B cell (primary cell): ENCODE measurements at regions of chr5 and their contacts with region 1.

Region 1: GRCh38 chr5:142888469-142889085 is 118.4 kb downstream of the ARHGAP26 start:
- DNase-seq: peak; percentile 48
- ATAC-seq: peak; percentile 28
- H3K4me3 ChIP-seq: no peak overlapping the region
- H3K4me3 Mint-ChIP-seq: no peak overlapping the region
- H3K27ac ChIP-seq: no peak overlapping the region
- H3K27ac Mint-ChIP-seq: no peak overlapping the region
- H3K4me1 ChIP-seq: no peaks in the 10 kb centered on the region
- H3K4me1 Mint-ChIP-seq: no peaks in the 10 kb centered on the region
- H3K27me3 ChIP-seq: no peaks in the 10 kb centered on the region
- H3K27me3 Mint-ChIP-seq: no peaks in the 10 kb centered on the region
- CTCF ChIP-seq: peak; percentile 84

Region 2: DNA sequence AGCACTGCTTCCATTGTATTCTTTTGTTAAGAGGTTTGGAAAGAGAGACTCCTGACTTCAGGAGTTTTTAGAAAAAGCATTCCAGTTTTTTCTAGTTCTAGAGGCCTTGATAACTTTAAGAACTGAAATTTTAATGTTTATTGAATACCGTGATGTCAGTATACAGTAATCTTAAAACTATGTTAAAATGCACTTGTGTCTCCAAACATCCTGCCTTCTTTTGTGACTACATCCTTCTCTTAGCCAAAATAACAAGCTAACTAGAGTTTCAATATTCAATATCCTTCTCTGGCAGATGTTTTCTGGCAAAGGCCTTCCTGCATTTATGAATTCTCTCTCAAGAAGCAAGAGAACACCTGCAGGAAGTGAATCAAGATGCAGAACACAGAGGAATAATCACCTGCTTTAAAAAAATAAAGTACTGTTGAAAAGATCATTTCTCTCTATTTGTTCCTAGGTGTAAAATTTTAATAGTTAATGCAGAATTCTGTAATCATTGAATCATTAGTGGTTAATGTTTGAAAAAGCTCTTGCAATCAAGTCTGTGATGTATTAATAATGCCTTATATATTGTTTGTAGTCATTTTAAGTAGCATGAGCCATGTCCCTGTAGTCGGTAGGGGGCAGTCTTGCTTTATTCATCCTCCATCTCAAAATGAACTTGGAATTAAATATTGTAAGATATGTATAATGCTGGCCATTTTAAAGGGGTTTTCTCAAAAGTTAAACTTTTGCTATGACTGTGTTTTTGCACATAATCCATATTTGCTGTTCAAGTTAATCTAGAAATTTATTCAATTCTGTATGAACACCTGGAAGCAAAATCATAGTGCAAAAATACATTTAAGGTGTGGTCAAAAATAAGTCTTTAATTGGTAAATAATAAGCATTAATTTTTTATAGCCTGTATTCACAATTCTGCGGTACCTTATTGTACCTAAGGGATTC is 736.9 kb before region 1 on chr5:
- CTCF ChIA-PET with region 1: no interaction called
- POLR2A ChIA-PET with region 1: no interaction called
- intact Hi-C with region 1: loop called (anchors 10 kb)
- DNase-seq: peak; percentile 67
- ATAC-seq: no peak
- H3K4me3 ChIP-seq: no peak overlapping the region
- H3K4me3 Mint-ChIP-seq: no peak overlapping the region
- H3K27ac ChIP-seq: no peak overlapping the region
- H3K27ac Mint-ChIP-seq: no peak overlapping the region
- H3K4me1 ChIP-seq: no peaks in the 10 kb centered on the region
- H3K4me1 Mint-ChIP-seq: no peaks in the 10 kb centered on the region
- H3K27me3 ChIP-seq: no peaks in the 10 kb centered on the region
- H3K27me3 Mint-ChIP-seq: no peaks in the 10 kb centered on the region
- CTCF ChIP-seq: peak; percentile 90

Region 3: DNA sequence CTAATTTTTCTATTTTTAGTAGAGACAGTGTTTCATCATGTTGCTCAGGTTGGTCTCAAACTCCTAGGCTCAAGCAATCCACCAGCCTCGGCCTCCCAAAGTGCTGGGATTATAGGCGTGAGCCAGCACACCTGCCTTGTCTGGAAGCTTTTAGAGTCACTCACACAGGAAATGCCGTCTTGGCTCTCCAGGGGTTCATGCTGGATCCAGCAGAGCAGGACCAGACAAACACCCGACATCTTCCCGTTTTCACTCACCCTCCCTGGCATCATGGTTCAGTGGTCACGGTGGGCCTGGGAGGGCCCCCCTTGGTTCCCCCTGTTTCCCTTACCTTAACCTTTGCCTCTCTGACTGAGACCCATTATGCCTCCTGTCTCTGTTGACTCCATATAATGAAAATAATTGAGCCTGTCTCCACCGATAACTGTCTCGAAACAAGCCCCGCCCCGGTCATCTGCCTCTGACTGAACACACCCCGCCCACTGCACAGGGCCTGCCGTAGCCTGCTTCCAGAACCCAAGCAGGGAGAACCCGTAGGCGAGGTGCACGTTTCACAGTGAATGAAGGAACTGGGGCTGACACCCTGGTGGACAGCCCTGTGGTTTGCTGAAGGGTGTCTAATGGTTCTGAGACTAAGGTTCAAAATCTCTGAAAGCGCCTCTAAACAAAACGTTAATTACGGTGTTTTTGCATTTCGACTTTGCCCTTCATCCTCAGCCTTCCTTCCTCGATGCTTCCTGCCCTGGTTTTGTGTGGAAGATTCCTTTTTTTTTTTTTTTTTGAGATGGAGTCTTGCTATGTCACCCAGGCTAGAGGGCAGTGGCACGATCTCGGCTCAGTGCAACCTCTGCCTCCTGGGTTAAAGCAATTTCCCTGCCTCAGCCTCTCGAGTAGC is 524.1 kb before region 1 on chr5:
- CTCF ChIA-PET with region 1: no interaction called
- POLR2A ChIA-PET with region 1: no interaction called
- intact Hi-C with region 1: no loop called
- DNase-seq: peak; percentile 27
- ATAC-seq: peak; percentile 34
- H3K4me3 ChIP-seq: no peak overlapping the region
- H3K4me3 Mint-ChIP-seq: peak overlapping the region; percentile 52
- H3K27ac ChIP-seq: no peak overlapping the region
- H3K27ac Mint-ChIP-seq: no peak overlapping the region
- H3K4me1 ChIP-seq: peaks cover 29 to 30% of the 10 kb centered on the region in 2 donors
- H3K4me1 Mint-ChIP-seq: peaks cover 33% of the 10 kb centered on the region
- H3K27me3 ChIP-seq: peaks cover 0 to 27% (median 3%) of the 10 kb centered on the region in 4 experiments
- H3K27me3 Mint-ChIP-seq: peaks cover 15% of the 10 kb centered on the region
- CTCF ChIP-seq: no peak

Region 4: GRCh38 chr5:142611154-142611553 is 277.4 kb before region 1 on chr5:
- CTCF ChIA-PET with region 1: interaction called, 6 read pairs
- POLR2A ChIA-PET with region 1: no interaction called
- intact Hi-C with region 1: loop called (anchors 1 kb)
- DNase-seq: peak; percentile 59
- ATAC-seq: peak; percentile 53
- H3K4me3 ChIP-seq: no peak overlapping the region
- H3K4me3 Mint-ChIP-seq: no peak overlapping the region
- H3K27ac ChIP-seq: no peak overlapping the region
- H3K27ac Mint-ChIP-seq: no peak overlapping the region
- H3K4me1 ChIP-seq: no peaks in the 10 kb centered on the region
- H3K4me1 Mint-ChIP-seq: no peaks in the 10 kb centered on the region
- H3K27me3 ChIP-seq: peaks cover 0 to 10% (median under 1%) of the 10 kb centered on the region in 4 experiments
- H3K27me3 Mint-ChIP-seq: peaks cover 28% of the 10 kb centered on the region
- CTCF ChIP-seq: peak; percentile 88

Region 5: DNA sequence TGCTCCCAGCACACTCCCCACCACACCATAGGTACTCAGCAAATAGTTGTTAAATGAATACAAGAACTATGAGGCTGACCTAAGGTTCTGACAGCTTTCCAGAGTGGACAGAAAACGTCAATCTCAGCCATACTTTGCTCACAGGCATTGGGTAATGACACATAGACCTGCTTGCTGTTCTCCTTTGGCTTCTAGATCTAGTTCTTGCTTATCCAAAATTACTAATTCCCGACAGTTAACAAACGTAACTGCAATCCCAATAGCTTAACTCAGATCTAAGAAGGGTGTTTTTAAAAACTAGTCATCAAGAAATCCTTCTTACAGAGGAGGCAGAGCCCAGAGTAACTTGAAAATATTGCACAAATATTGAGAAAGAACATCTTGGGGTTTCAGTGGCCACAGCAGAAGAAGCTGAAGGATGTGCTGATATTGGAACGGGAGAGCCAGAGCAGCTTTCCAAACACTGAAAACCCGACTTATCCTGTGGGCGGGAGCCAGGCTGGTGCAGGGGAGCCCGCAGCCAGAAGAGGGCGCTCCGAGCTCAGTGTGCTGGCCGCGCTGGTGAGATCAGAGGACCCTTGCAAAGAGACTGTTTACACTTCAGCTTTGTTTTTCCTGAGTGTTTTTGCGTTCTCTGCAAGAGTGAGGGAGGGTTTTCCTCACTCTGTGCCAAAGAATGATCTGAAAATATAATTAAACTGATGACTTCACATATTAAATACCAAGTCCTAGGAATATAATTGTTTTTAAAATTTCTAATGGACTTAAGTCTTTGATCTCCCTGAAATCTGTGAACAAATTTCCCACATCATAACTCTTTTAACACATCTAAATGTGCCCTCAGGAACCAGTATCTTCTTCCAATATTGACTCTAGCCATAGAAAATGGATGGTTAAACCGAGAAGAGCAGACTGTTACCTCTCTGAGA is 233.0 kb before region 1 on chr5:
- CTCF ChIA-PET with region 1: interaction called, 32 read pairs
- POLR2A ChIA-PET with region 1: no interaction called
- intact Hi-C with region 1: loop called (anchors 1 kb)
- DNase-seq: peak; percentile 60
- ATAC-seq: peak; percentile 75
- H3K4me3 ChIP-seq: no peak overlapping the region
- H3K4me3 Mint-ChIP-seq: no peak overlapping the region
- H3K27ac ChIP-seq: no peak overlapping the region
- H3K27ac Mint-ChIP-seq: no peak overlapping the region
- H3K4me1 ChIP-seq: no peaks in the 10 kb centered on the region
- H3K4me1 Mint-ChIP-seq: no peaks in the 10 kb centered on the region
- H3K27me3 ChIP-seq: peaks cover 0 to 12% (median 2%) of the 10 kb centered on the region in 4 experiments
- H3K27me3 Mint-ChIP-seq: peaks cover 50% of the 10 kb centered on the region
- CTCF ChIP-seq: peak; percentile 91

Region 6: DNA sequence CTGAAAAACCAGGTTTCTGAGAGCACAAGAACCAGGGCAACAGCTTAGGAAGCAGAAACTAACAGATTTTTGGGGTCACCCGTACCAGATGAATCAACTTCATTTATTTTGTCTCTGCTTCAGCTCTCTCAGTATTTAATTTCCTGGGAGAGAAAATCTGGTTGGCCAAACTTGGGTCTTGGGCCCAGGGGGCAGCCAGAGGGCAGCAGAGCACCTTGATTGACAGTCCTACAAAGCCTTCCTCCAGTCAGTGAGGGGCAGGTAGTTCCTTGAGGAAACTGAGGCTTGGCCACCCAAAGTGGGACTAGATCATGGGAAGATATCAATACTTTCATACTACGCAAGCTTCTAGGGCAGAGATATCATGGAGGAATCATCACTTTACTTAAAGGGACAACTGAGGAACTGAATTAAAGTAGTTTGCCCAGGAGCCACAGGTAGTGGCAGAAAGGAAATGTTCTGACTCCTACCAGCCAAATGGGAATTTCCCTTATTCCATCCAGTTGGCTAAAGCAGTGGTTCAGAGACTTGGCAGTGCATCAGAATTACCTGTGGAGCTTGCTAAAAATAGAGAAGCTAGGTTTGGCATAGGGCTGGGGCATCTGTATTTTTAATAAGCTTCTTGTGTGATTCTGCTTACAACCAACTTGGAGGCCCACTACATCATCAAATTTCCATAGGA is 139.9 kb before region 1 on chr5:
- CTCF ChIA-PET with region 1: interaction called, 616 read pairs
- POLR2A ChIA-PET with region 1: no interaction called
- intact Hi-C with region 1: loop called (anchors 1 kb)
- DNase-seq: peak; percentile 74
- ATAC-seq: peak; percentile 68
- H3K4me3 ChIP-seq: no peak overlapping the region
- H3K4me3 Mint-ChIP-seq: no peak overlapping the region
- H3K27ac ChIP-seq: no peak overlapping the region
- H3K27ac Mint-ChIP-seq: no peak overlapping the region
- H3K4me1 ChIP-seq: no peaks in the 10 kb centered on the region
- H3K4me1 Mint-ChIP-seq: no peaks in the 10 kb centered on the region
- H3K27me3 ChIP-seq: no peaks in the 10 kb centered on the region
- H3K27me3 Mint-ChIP-seq: peaks cover 13% of the 10 kb centered on the region
- CTCF ChIP-seq: peak; percentile 80

Region 7: GRCh38 chr5:142777850-142778249 is 110.7 kb before region 1 on chr5:
- CTCF ChIA-PET with region 1: no interaction called
- POLR2A ChIA-PET with region 1: no interaction called
- intact Hi-C with region 1: no loop called
- DNase-seq: no peak
- ATAC-seq: no peak
- H3K4me3 ChIP-seq: no peak overlapping the region
- H3K4me3 Mint-ChIP-seq: no peak overlapping the region
- H3K27ac ChIP-seq: no peak overlapping the region
- H3K27ac Mint-ChIP-seq: no peak overlapping the region
- H3K4me1 ChIP-seq: no peaks in the 10 kb centered on the region
- H3K4me1 Mint-ChIP-seq: peaks cover 11% of the 10 kb centered on the region
- H3K27me3 ChIP-seq: no peaks in the 10 kb centered on the region
- H3K27me3 Mint-ChIP-seq: no peaks in the 10 kb centered on the region
- CTCF ChIP-seq: no peak

Region 8: DNA sequence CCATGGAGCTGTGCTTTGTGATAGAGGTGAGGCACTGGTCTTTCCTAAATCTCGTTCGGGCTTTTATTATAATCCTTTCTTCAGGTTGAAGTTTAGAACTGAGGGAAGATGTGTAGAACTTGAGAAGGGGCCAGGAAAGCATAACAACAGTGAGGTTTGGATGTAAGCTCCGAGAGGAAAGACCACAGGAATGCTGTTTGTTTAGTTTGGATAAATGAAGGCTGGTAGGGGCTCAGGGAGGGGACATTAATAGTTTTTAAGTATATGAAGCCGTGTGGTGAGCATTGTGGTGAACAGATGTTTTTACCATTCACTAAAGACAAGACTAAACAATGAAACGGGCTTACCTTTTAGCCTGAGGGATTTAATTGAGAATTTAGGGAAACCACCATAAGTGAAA is 12.3 kb after region 1 on chr5:
- CTCF ChIA-PET with region 1: interaction called, 30 read pairs
- POLR2A ChIA-PET with region 1: no interaction called
- intact Hi-C with region 1: no loop called
- DNase-seq: no peak
- ATAC-seq: no peak
- H3K4me3 ChIP-seq: no peak overlapping the region
- H3K4me3 Mint-ChIP-seq: no peak overlapping the region
- H3K27ac ChIP-seq: no peak overlapping the region
- H3K27ac Mint-ChIP-seq: no peak overlapping the region
- H3K4me1 ChIP-seq: no peaks in the 10 kb centered on the region
- H3K4me1 Mint-ChIP-seq: no peaks in the 10 kb centered on the region
- H3K27me3 ChIP-seq: no peaks in the 10 kb centered on the region
- H3K27me3 Mint-ChIP-seq: no peaks in the 10 kb centered on the region
- CTCF ChIP-seq: no peak

Region 9: DNA sequence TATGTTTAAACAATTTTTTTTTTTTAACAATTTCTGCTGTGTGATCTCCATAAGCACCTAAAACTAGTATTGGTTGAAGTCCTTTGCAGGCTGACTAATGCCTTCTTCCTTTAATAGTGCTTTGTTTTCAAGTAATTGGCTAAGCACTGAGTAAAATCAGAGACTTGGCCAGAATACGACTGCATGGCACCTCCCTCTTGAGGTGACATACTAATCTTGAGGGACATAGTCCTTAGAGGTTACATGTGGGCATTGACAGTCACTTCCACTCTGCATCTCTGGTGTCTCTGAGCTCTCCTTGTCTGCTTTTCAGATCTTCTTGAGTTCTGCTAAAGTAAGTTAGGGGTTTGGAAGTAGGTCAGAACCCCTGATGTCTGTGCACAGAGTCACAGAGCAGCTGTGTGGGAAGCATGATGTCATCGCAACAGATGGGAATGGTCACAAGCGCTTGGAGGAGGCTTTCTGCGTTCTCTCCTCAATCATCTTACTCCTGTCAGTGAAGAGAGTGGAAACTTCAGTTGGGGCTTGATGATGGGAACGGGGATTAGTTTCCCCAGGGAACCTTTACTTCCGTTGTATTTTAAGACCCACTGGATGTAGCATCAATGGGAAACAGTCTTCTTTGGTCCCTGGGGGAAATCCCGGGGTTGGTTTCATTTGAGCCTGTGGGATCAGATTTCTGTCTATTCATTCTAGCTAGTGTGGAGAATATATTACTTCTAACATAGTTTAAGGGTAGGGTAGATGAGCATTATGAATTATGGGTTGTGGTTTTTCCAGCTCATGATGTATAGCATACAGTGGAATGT is 18.5 kb after region 1 on chr5:
- CTCF ChIA-PET with region 1: interaction called, 15 read pairs
- POLR2A ChIA-PET with region 1: no interaction called
- intact Hi-C with region 1: no loop called
- DNase-seq: no peak
- ATAC-seq: no peak
- H3K4me3 ChIP-seq: no peak overlapping the region
- H3K4me3 Mint-ChIP-seq: no peak overlapping the region
- H3K27ac ChIP-seq: no peak overlapping the region
- H3K27ac Mint-ChIP-seq: no peak overlapping the region
- H3K4me1 ChIP-seq: no peaks in the 10 kb centered on the region
- H3K4me1 Mint-ChIP-seq: no peaks in the 10 kb centered on the region
- H3K27me3 ChIP-seq: no peaks in the 10 kb centered on the region
- H3K27me3 Mint-ChIP-seq: no peaks in the 10 kb centered on the region
- CTCF ChIP-seq: no peak

Region 10: GRCh38 chr5:143314659-143315058 is 426.1 kb after region 1 on chr5:
- CTCF ChIA-PET with region 1: no interaction called
- POLR2A ChIA-PET with region 1: no interaction called
- intact Hi-C with region 1: no loop called
- DNase-seq: no peak
- ATAC-seq: no peak
- H3K4me3 ChIP-seq: no peak overlapping the region
- H3K4me3 Mint-ChIP-seq: peak overlapping the region; percentile 1
- H3K27ac ChIP-seq: peak overlapping the region in 1 of 2 donors; percentile 61
- H3K27ac Mint-ChIP-seq: no peak overlapping the region
- H3K4me1 ChIP-seq: peaks cover 12 to 23% of the 10 kb centered on the region in 2 donors
- H3K4me1 Mint-ChIP-seq: peaks cover 62% of the 10 kb centered on the region
- H3K27me3 ChIP-seq: no peaks in the 10 kb centered on the region
- H3K27me3 Mint-ChIP-seq: no peaks in the 10 kb centered on the region
- CTCF ChIP-seq: no peak